Right cardiac atrium (tissue), 5 donors: ENCODE measurements at regions of chr6 and their contacts with region 1.

Region 1: DNA sequence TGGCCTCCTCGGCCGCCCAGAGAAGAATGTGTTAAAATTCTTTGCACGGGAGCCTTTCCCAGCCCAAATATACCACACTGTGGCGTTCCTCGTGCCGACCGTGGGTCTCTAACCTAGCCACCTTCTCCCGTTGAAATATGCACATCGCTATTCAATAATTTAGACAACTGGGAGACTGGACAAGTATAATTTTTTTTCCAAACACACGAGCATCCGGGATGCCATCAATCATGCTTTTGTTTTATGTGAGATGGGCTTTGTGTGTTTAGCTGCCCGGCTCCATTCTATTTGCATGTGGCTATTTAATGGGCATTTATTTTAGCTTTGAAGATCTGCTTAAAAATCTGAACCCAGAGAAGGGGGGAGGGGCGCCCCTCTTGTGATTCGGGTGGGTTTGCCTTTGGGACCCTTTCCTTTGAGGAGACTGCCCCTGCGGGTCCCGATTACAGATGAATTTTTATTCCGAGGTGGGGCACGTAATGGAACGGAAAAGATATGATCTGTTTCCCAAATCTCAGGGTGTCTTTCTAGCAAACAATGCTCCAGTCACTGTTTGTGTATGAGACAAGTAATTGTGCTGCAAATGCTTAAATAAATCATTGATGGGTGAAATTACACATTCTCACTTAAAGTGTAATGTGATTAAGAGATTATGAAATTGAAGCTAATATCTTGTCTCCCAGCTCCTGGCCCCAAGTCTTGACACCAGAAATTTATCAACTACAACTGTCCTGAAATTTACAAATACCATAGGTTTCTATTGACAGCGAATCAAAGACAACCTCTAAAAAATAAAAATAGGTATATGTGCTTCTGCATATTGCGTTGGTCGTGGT is 30.9 kb downstream of the TFAP2A start:
- DNase-seq: no peak
- ATAC-seq: no peak
- H3K4me3 ChIP-seq: peak overlapping the region; percentile 13
- H3K27ac ChIP-seq: no peak overlapping the region
- H3K4me1 ChIP-seq: no peaks in the 10 kb centered on the region
- H3K27me3 ChIP-seq: peaks cover 3% of the 10 kb centered on the region

Region 2: GRCh38 chr6:10278746-10279145 is 105.3 kb before region 1 on chr6:
- intact Hi-C with region 1: no loop called
- DNase-seq: no peak
- ATAC-seq: peak in 1 of 2 donors; percentile 47
- H3K4me3 ChIP-seq: no peak overlapping the region
- H3K27ac ChIP-seq: no peak overlapping the region
- H3K4me1 ChIP-seq: no peaks in the 10 kb centered on the region
- H3K27me3 ChIP-seq: no peaks in the 10 kb centered on the region

Region 3: DNA sequence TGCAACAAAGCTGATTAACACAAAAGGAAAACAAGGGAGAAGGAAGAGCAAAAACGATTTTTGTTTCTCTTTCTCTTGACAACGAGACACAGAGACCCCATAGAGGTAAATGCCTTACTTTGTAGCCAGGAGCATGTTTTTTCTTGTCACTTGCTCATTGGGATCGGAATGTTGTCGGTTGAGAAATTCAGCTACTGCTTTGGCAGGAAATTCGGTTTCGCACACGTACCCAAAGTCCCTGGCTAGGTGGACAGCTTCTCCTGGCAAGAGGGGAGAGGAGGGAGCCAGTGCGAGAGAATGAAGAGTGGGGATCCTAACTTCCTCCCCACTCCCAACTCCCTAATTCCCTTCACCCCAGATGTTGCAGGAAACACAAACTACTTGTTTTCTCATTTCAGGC is 16.3 kb after region 1 on chr6:
- intact Hi-C with region 1: loop called in 1 of 4 experiments (anchors 2 kb)
- DNase-seq: no peak
- ATAC-seq: no peak
- H3K4me3 ChIP-seq: no peak overlapping the region
- H3K27ac ChIP-seq: no peak overlapping the region
- H3K4me1 ChIP-seq: peaks cover 4% of the 10 kb centered on the region
- H3K27me3 ChIP-seq: peaks cover 6% of the 10 kb centered on the region

Region 4: DNA sequence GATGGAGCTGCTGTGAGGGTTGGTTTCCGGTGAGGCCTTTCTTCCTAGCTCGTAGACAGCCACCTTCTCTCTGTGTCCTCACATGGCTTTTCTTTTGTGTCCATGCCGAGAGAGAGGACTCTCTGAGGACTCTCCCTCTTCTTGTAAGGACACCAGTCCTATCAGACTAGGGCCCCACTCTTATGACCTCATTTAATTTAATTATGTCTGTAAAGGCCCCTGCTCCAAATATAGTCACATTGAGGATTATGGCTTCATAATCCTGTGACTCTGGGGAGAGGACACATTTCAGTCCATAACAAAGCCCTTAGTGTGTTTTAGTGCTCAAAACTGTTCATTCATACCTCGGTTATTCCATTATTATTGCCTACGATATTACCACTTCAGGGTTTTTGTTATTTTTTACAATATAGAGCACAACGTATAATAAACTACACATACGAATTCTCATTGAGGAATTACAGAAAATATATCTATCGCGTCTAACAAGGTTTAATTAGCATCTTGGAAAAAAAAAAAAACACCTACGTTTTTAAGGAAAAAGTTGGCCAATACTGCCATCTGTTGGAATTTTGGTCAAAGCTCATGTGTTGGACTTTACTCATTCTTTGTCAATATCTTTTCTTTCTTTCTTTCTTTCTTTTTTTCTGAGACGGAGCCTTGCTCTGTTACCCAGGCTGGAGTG is 50.8 kb after region 1 on chr6:
- intact Hi-C with region 1: no loop called
- DNase-seq: no peak
- ATAC-seq: no peak
- H3K4me3 ChIP-seq: no peak overlapping the region
- H3K27ac ChIP-seq: no peak overlapping the region
- H3K4me1 ChIP-seq: no peaks in the 10 kb centered on the region
- H3K27me3 ChIP-seq: no peaks in the 10 kb centered on the region